Naive thymus-derived CD4-positive, alpha-beta T cell (primary cell): ENCODE measurements at regions of chrX and their contacts with region 1.

Region 1: DNA sequence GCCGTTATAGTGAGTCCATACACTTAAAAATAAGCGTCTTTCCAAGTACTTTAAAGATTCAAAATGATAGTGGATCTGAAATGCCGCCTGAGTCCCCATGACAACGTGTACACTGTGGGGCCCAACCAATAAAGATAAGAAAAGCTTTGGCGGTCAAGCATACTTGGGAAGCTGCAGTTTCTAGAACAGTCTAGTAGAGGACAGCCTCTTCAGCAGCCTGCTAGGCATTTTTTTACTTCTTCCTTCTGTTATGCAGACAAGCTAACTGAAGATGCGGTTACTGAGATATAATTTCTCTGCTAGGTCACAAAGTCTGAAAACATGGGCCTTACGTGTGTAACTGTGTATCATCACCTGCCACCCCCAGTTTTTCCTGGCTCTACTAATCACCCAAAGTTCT is 402 bp upstream of the UPRT start:
- DNase-seq: no peak
- ATAC-seq: peak; percentile 52
- H3K4me3 ChIP-seq: peak overlapping the region; percentile 97
- H3K4me3 Mint-ChIP-seq: peak overlapping the region; percentile 89 to 99 (median 94)
- H3K27ac ChIP-seq: peak overlapping the region; percentile 95
- H3K27ac Mint-ChIP-seq: peak overlapping the region; percentile 87 to 98 (median 96)
- H3K4me1 ChIP-seq: peaks cover 7 to 9% of the 10 kb centered on the region in 2 donors
- H3K4me1 Mint-ChIP-seq: peaks cover 15 to 68% (median 48%) of the 10 kb centered on the region in 7 donors
- H3K27me3 ChIP-seq: no peaks in the 10 kb centered on the region
- H3K27me3 Mint-ChIP-seq: no peaks in the 10 kb centered on the region

Region 2: GRCh38 chrX:73525928-73526690 is 1747.4 kb before region 1 on chrX:
- CTCF ChIA-PET with region 1: no interaction called
- POLR2A ChIA-PET with region 1: no interaction called
- intact Hi-C with region 1: no loop called
- DNase-seq: no peak
- ATAC-seq: no peak
- H3K4me3 ChIP-seq: no peak overlapping the region
- H3K4me3 Mint-ChIP-seq: no peak overlapping the region
- H3K27ac ChIP-seq: no peak overlapping the region
- H3K27ac Mint-ChIP-seq: no peak overlapping the region
- H3K4me1 ChIP-seq: no peaks in the 10 kb centered on the region
- H3K4me1 Mint-ChIP-seq: no peaks in the 10 kb centered on the region
- H3K27me3 ChIP-seq: no peaks in the 10 kb centered on the region
- H3K27me3 Mint-ChIP-seq: no peaks in the 10 kb centered on the region

Region 3: DNA sequence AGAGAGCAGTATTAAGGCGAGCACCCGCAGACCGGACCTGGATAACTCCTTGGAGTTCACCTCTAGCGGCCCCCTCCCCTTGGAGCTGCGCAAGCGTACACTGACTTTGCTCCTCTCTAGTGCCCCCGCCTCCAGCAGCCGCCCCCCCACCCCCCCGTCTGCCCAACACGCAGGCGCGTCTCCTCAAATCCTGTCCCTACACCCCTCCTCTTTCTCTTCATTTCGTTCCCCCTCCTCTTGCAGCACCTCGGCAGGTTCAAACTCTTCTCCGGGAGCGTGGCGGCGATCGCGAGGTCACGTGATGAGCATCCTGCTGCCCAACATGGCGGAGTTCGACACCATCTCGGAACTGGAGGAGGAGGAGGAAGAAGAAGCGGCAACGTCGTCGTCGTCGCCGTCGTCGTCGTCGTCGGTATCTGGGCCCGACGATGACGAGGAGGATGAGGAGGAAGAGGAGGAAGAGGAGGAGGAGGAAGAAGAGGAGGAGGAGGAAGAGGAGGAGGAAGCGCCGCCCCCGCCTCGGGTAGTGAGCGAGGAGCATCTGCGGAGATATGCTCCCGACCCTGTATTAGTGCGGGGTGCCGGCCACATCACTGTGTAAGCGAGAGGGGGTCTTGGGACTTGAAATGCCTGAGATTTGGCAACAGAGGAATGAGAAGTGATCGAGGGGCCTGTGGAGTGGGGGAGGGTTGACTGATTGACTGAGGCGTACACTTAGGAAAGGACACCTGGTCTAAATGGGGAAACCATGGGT is 1710.3 kb before region 1 on chrX and contains the start of gene CHIC1:
- CTCF ChIA-PET with region 1: no interaction called
- POLR2A ChIA-PET with region 1: no interaction called
- intact Hi-C with region 1: loop called (anchors 5 to 10 kb)
- DNase-seq: peak; percentile 33 to 80 (median 71)
- ATAC-seq: peak; percentile 80
- H3K4me3 ChIP-seq: peak within 1 kb of the TSS; percentile 73
- H3K4me3 Mint-ChIP-seq: peak within 1 kb of the TSS; percentile 91 to 99 (median 96)
- H3K27ac ChIP-seq: peak within 1 kb of the TSS; percentile 81
- H3K27ac Mint-ChIP-seq: peak within 1 kb of the TSS; percentile 96 to 100 (median 98)
- H3K4me1 ChIP-seq: no peaks in the 10 kb centered on the region
- H3K4me1 Mint-ChIP-seq: peaks cover 7 to 26% (median 13%) of the 10 kb centered on the region in 7 donors
- H3K27me3 ChIP-seq: no peaks in the 10 kb centered on the region
- H3K27me3 Mint-ChIP-seq: no peaks in the 10 kb centered on the region
- total RNA-seq, gene CHIC1: 7.8 to 17.3 (median 10.7) TPM

Region 4: DNA sequence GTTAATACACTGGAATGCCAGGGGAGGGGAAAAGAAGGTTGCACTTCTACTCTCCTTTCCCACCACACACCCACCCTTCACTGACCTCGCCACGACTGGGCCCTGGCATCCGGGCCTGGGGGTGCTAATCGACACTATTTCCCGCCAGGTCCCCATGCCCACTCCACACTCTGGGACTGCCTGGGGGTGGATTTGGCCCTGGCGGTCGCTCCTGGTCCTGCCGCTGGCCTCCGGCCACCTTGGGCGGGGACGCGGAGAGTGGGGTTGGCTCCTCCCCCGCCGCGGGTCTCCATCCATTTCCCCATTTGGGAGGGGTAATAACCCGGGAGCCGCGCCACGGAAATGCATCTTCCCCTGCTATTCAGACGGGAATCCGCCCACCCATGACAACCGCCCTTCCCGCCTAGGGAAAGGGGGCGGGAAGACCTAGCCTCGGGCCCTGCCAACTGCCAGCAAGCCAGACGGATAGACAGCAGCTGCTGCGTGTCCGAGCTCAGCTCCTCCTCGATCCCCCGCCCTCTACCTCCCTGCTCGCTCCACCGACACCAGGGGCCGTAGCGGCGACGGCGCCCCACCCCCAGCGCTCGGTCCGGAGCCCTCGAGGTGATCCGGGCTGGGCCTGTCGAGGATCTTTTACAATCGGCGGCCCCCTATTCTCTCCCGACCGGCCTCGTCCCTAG is 737.2 kb before region 1 on chrX:
- CTCF ChIA-PET with region 1: no interaction called
- POLR2A ChIA-PET with region 1: no interaction called
- intact Hi-C with region 1: no loop called
- DNase-seq: peak in 6 of 9 donors; percentile 6 to 35 (median 12)
- ATAC-seq: peak; percentile 73
- H3K4me3 ChIP-seq: peak overlapping the region; percentile 63
- H3K4me3 Mint-ChIP-seq: peak overlapping the region; percentile 75 to 89 (median 85)
- H3K27ac ChIP-seq: peak overlapping the region; percentile 54
- H3K27ac Mint-ChIP-seq: peak overlapping the region in 8 of 9 donors; percentile 51 to 80 (median 68)
- H3K4me1 ChIP-seq: peaks cover 0 to 3% of the 10 kb centered on the region in 2 donors
- H3K4me1 Mint-ChIP-seq: peaks cover 0 to 18% (median 7%) of the 10 kb centered on the region in 7 donors
- H3K27me3 ChIP-seq: no peaks in the 10 kb centered on the region
- H3K27me3 Mint-ChIP-seq: no peaks in the 10 kb centered on the region

Region 5: DNA sequence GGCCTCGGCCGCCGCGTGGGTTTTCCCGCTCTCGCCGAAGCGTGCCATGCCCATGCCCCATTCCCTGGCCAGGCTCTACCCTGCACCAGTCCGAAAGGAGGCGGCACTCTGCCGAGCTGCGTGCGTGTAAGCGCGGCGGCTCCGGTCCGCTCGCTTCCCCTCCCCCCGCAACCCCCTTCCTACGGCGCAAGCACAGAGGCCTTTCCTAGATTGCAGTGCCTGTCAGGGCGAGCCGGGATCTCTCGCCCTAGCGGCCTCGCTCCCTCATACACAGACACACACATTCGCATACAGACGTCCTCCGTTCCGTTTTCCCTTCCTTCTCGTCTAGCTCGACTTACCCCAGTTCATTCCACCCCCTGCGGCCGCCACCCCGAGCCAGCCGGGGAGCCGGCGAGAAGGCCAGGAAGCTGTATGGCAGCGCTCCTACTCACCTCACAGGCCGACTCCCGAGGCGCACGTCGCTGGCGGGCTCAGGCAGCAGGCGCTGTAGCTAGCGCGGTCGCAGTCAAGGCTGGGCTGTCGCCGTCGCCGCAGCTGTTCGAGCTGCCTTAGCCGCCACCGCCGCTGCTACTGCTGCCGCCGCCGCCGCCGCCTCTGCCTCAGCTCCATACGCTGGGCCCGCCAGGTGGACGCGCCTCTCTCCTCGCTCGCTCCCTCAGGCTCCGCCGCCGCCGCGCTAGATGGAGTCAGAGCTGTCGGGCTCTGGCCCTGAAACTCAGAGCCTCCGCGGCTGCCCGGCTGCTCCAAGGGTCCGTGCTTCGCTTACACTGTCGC is 348.8 kb before region 1 on chrX:
- CTCF ChIA-PET with region 1: no interaction called
- POLR2A ChIA-PET with region 1: interaction called, 5 read pairs
- intact Hi-C with region 1: loop called (anchors 2 to 10 kb)
- DNase-seq: peak in 8 of 9 donors; percentile 10 to 45 (median 30)
- ATAC-seq: peak; percentile 77
- H3K4me3 ChIP-seq: peak overlapping the region; percentile 47
- H3K4me3 Mint-ChIP-seq: peak overlapping the region; percentile 80 to 97 (median 92)
- H3K27ac ChIP-seq: peak overlapping the region; percentile 53
- H3K27ac Mint-ChIP-seq: peak overlapping the region in 7 of 9 donors; percentile 59 to 96 (median 86)
- H3K4me1 ChIP-seq: no peaks in the 10 kb centered on the region
- H3K4me1 Mint-ChIP-seq: peaks cover 4 to 11% (median 7%) of the 10 kb centered on the region in 7 donors
- H3K27me3 ChIP-seq: no peaks in the 10 kb centered on the region
- H3K27me3 Mint-ChIP-seq: peaks cover 0 to 30% (median 7%) of the 10 kb centered on the region in 5 donors

Region 6: DNA sequence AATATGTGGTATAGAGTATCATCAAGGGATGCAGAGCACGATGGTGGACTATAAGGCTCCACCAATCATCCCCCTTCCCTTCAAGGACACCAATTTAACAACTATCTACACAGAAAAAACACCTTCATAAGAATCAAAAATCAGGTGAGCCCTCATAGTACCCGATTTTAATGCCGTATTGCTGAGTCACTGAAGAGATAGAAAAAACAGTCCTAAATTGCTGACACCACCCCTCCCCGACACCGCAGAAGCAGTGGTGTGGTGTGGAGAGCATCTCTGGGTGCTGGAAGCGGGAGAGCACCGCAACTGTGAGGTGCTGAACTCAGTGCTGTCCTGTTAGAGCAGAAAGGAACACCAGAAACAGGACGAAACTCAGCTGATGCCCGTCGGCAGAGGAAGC is 166.7 kb before region 1 on chrX:
- CTCF ChIA-PET with region 1: no interaction called
- POLR2A ChIA-PET with region 1: no interaction called
- intact Hi-C with region 1: no loop called
- DNase-seq: no peak
- ATAC-seq: no peak
- H3K4me3 ChIP-seq: no peak overlapping the region
- H3K4me3 Mint-ChIP-seq: no peak overlapping the region
- H3K27ac ChIP-seq: no peak overlapping the region
- H3K27ac Mint-ChIP-seq: no peak overlapping the region
- H3K4me1 ChIP-seq: no peaks in the 10 kb centered on the region
- H3K4me1 Mint-ChIP-seq: peaks cover 2 to 32% (median 20%) of the 10 kb centered on the region in 7 donors
- H3K27me3 ChIP-seq: no peaks in the 10 kb centered on the region
- H3K27me3 Mint-ChIP-seq: no peaks in the 10 kb centered on the region

Region 7: GRCh38 chrX:75522565-75523431 is 249.3 kb after region 1 on chrX and contains the start of gene ZDHHC15:
- CTCF ChIA-PET with region 1: no interaction called
- POLR2A ChIA-PET with region 1: interaction called, 5 read pairs
- intact Hi-C with region 1: loop called in 1 of 2 experiments (anchors 1 kb)
- DNase-seq: peak; percentile 18 to 63 (median 51)
- ATAC-seq: peak; percentile 91
- H3K4me3 ChIP-seq: peak within 1 kb of the TSS; percentile 64
- H3K4me3 Mint-ChIP-seq: peak within 1 kb of the TSS; percentile 70 to 97 (median 90)
- H3K27ac ChIP-seq: peak within 1 kb of the TSS; percentile 66
- H3K27ac Mint-ChIP-seq: peak within 1 kb of the TSS; percentile 15 to 93 (median 90)
- H3K4me1 ChIP-seq: peaks cover 0 to 7% of the 10 kb centered on the region in 2 donors
- H3K4me1 Mint-ChIP-seq: peaks cover 9 to 38% (median 30%) of the 10 kb centered on the region in 7 donors
- H3K27me3 ChIP-seq: no peaks in the 10 kb centered on the region
- H3K27me3 Mint-ChIP-seq: no peaks in the 10 kb centered on the region
- total RNA-seq, gene ZDHHC15: 0.16 to 0.84 (median 0.42) TPM in 4 of 5 experiments, not detected in the other

Region 8: DNA sequence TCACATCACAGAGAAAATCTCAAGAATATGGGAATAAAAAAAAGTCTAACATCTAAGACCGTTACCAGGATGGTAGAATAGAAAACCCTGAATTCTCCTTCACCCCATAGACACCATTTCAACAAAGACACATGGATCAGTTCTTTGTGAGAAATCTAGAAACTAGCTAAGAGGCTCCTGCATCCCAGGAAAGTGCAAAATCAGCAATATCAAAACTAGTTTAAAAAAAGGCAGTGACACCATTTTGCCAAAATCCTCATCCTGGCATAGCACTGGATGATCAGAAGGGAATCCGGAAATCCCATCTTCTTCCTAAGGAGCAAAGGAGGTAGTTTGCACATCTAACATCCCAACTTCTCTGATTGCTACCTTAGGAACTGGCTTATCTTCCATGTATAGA is 600.5 kb after region 1 on chrX:
- CTCF ChIA-PET with region 1: no interaction called
- POLR2A ChIA-PET with region 1: no interaction called
- intact Hi-C with region 1: no loop called
- DNase-seq: no peak
- ATAC-seq: no peak
- H3K4me3 ChIP-seq: no peak overlapping the region
- H3K4me3 Mint-ChIP-seq: no peak overlapping the region
- H3K27ac ChIP-seq: no peak overlapping the region
- H3K27ac Mint-ChIP-seq: no peak overlapping the region
- H3K4me1 ChIP-seq: no peaks in the 10 kb centered on the region
- H3K4me1 Mint-ChIP-seq: no peaks in the 10 kb centered on the region
- H3K27me3 ChIP-seq: no peaks in the 10 kb centered on the region
- H3K27me3 Mint-ChIP-seq: peaks cover 0 to 25% (median 4%) of the 10 kb centered on the region in 5 donors

Region 9: GRCh38 chrX:76148753-76149152 is 875.3 kb after region 1 on chrX:
- CTCF ChIA-PET with region 1: no interaction called
- POLR2A ChIA-PET with region 1: interaction called, 4 read pairs
- intact Hi-C with region 1: loop called (anchors 5 kb)
- DNase-seq: peak in 8 of 9 donors; percentile 25 to 77 (median 63)
- ATAC-seq: peak; percentile 45
- H3K4me3 ChIP-seq: peak overlapping the region; percentile 32
- H3K4me3 Mint-ChIP-seq: peak overlapping the region; percentile 78 to 98 (median 88)
- H3K27ac ChIP-seq: peak overlapping the region; percentile 78
- H3K27ac Mint-ChIP-seq: peak overlapping the region; percentile 93 to 100 (median 99)
- H3K4me1 ChIP-seq: peaks cover 8 to 14% of the 10 kb centered on the region in 2 donors
- H3K4me1 Mint-ChIP-seq: peaks cover 2 to 29% (median 17%) of the 10 kb centered on the region in 7 donors
- H3K27me3 ChIP-seq: no peaks in the 10 kb centered on the region
- H3K27me3 Mint-ChIP-seq: no peaks in the 10 kb centered on the region

Region 10: GRCh38 chrX:76427560-76428242 is 1154.2 kb after region 1 on chrX and contains the start of gene MAGEE1:
- CTCF ChIA-PET with region 1: no interaction called
- POLR2A ChIA-PET with region 1: no interaction called
- intact Hi-C with region 1: loop called (anchors 5 kb)
- DNase-seq: peak; percentile 66 to 80 (median 75)
- ATAC-seq: peak; percentile 91
- H3K4me3 ChIP-seq: peak within 1 kb of the TSS; percentile 81
- H3K4me3 Mint-ChIP-seq: peak within 1 kb of the TSS; percentile 85 to 95 (median 91)
- H3K27ac ChIP-seq: peak within 1 kb of the TSS; percentile 89
- H3K27ac Mint-ChIP-seq: peak within 1 kb of the TSS; percentile 86 to 96 (median 92)
- H3K4me1 ChIP-seq: peaks cover 0 to 12% of the 10 kb centered on the region in 2 donors
- H3K4me1 Mint-ChIP-seq: peaks cover 12 to 47% (median 41%) of the 10 kb centered on the region in 7 donors
- H3K27me3 ChIP-seq: no peaks in the 10 kb centered on the region
- H3K27me3 Mint-ChIP-seq: peaks cover 0 to 4% (median 0%) of the 10 kb centered on the region in 5 donors
- total RNA-seq, gene MAGEE1: 2.7 to 11.8 (median 10.7) TPM